ENCODE measurements at regions of chr19 and their contacts with region 1.

Region 1: GRCh38 chr19:13150187-13150930 is at the starts of genes IER2 and STX10:
- DNase-seq: peak; percentile 96
- H3K4me3 Mint-ChIP-seq: peak within 1 kb of the TSS; percentile 99
- H3K27ac Mint-ChIP-seq: peak within 1 kb of the TSS; percentile 98
- H3K4me1 Mint-ChIP-seq: peaks cover 19% of the 10 kb centered on the region
- H3K27me3 Mint-ChIP-seq: no peaks in the 10 kb centered on the region
- total RNA-seq, gene IER2: 120 to 123 TPM
- total RNA-seq, gene STX10: 48.3 to 48.9 TPM

Region 2: GRCh38 chr19:13012690-13013608 is 137.4 kb before region 1 on chr19:
- CTCF ChIA-PET with region 1: no interaction called
- intact Hi-C with region 1: loop called (anchors 5 kb)
- DNase-seq: peak; percentile 83
- H3K4me3 Mint-ChIP-seq: peak overlapping the region; percentile 73
- H3K27ac Mint-ChIP-seq: peak overlapping the region; percentile 83
- H3K4me1 Mint-ChIP-seq: peaks cover 22% of the 10 kb centered on the region
- H3K27me3 Mint-ChIP-seq: peaks cover 40% of the 10 kb centered on the region

Region 3: GRCh38 chr19:13117772-13118423 is 32.5 kb before region 1 on chr19 and contains the start of gene NACC1:
- CTCF ChIA-PET with region 1: no interaction called
- intact Hi-C with region 1: loop called (anchors 1 kb)
- DNase-seq: peak; percentile 89
- H3K4me3 Mint-ChIP-seq: peak within 1 kb of the TSS; percentile 97
- H3K27ac Mint-ChIP-seq: peak within 1 kb of the TSS; percentile 91
- H3K4me1 Mint-ChIP-seq: peaks cover 49% of the 10 kb centered on the region
- H3K27me3 Mint-ChIP-seq: no peaks in the 10 kb centered on the region
- total RNA-seq, gene NACC1: 41.3 to 45.0 TPM

Region 4: DNA sequence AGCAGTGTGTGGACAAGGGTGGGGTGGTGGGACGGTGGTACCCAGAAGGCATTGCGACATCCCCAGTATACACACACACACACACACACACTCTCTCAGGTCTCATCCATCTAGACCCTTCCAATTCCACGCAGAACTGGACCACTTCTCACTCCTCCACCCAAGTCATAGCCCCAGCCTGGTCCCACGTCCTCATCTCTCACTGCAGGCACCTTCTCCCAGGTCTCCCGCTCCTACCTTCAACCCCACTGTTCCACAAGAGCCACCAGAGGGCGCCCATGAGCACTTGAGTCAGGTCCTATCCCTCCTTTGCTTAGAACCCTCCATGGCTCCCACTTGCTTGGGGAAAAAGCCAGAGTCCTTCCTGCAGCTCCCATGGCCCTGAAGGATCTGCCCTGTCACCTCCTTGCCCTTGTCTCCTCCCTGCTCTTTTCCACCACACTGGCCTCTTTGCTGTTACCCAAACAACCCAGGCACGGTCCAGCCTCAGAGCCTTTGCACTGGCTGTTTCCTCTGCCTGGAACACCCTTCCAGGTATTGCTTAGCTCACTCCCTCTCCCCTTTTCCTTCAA is 62.5 kb after region 1 on chr19:
- CTCF ChIA-PET with region 1: no interaction called
- intact Hi-C with region 1: loop called (anchors 1 kb)
- DNase-seq: peak; percentile 89
- H3K4me3 Mint-ChIP-seq: no peak overlapping the region
- H3K27ac Mint-ChIP-seq: no peak overlapping the region
- H3K4me1 Mint-ChIP-seq: peaks cover 33% of the 10 kb centered on the region
- H3K27me3 Mint-ChIP-seq: no peaks in the 10 kb centered on the region

Region 5: DNA sequence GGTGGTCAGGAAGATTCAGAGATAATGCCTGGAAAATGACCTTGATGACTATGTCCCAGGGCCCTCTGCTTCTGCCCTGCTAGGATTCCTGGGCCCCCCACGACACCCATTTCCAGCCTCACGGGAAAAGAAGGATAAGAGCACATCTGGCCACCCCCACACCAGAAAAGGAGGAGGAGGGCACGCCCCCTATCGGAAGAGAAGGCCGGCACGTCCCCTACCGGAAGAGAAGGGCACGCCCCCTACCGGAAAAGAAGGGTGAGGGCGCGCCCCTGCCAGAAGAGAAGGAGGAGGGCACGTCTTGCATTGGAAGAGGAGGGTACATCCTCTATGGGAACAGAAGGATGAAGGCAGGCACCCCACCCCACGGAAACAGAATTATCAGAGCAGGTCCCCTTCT is 84.2 kb after region 1 on chr19:
- CTCF ChIA-PET with region 1: no interaction called
- intact Hi-C with region 1: no loop called
- DNase-seq: peak; percentile 82
- H3K4me3 Mint-ChIP-seq: peak overlapping the region; percentile 4
- H3K27ac Mint-ChIP-seq: peak overlapping the region; percentile 50
- H3K4me1 Mint-ChIP-seq: peaks cover 13% of the 10 kb centered on the region
- H3K27me3 Mint-ChIP-seq: no peaks in the 10 kb centered on the region

Region 6: DNA sequence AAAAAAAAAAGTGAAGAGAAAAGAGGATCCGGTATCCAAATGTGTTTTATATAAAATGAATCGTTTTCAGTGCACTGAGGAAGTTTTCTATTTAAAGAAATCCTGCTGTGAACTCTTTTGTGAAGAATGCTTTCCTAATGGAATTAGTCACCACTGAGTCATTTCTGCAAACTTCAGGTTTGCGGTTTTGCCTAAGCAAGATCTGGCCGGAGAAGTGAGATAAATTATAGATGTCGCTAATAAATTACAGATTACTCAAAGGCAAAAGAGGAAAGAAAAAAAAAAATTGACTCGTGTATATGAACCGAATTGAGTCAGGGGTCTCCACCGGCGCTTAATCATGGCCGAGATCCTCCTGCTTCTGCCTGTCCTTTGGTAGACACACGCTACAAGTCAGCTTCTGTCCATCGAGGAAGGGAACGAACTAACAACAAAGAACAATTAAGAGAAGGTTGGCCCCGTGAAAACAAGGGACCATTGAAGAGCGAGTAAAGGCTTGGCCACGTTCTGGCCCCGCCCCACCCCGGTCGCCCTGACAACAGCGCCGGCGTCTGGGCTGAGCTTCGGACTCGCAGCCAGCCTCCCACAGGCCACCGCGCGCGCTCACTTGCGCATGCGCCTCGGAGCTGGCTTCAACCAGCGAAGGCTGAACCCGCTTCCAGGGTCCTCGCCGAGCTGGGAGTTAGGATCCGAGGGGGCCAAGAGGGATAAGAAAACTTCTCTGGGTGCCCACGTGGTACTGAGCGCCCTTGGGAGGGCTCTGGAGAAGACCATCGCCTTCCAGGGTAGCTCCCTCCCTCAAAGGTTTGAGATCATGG is 581.0 kb after region 1 on chr19:
- CTCF ChIA-PET with region 1: no interaction called
- intact Hi-C with region 1: loop called (anchors 5 kb)
- DNase-seq: peak; percentile 95
- H3K4me3 Mint-ChIP-seq: peak overlapping the region; percentile 84
- H3K27ac Mint-ChIP-seq: peak overlapping the region; percentile 94
- H3K4me1 Mint-ChIP-seq: peaks cover 23% of the 10 kb centered on the region
- H3K27me3 Mint-ChIP-seq: no peaks in the 10 kb centered on the region

Measured in activated naive CD4-positive, alpha-beta T cell treated with anti-CD3 and anti-CD28 coated beads for 36 hours (primary cell).